B cell (primary cell): ENCODE measurements at regions of chr3 and their contacts with region 1.

Region 1: GRCh38 chr3:153161138-153161713 is 800 bp upstream of the RAP2B start:
- DNase-seq: peak; percentile 95
- ATAC-seq: peak; percentile 75
- H3K4me3 ChIP-seq: peak overlapping the region; percentile 61 to 99 (median 93)
- H3K4me3 Mint-ChIP-seq: peak overlapping the region; percentile 99
- H3K27ac ChIP-seq: peak overlapping the region; percentile 79 to 83
- H3K27ac Mint-ChIP-seq: peak overlapping the region; percentile 98
- H3K4me1 ChIP-seq: peaks cover 26 to 38% of the 10 kb centered on the region in 2 donors
- H3K4me1 Mint-ChIP-seq: peaks cover 47% of the 10 kb centered on the region
- H3K27me3 ChIP-seq: no peaks in the 10 kb centered on the region
- H3K27me3 Mint-ChIP-seq: no peaks in the 10 kb centered on the region
- CTCF ChIP-seq: no peak

Region 2: GRCh38 chr3:153069598-153070510 is 91.4 kb before region 1 on chr3:
- CTCF ChIA-PET with region 1: no interaction called
- POLR2A ChIA-PET with region 1: no interaction called
- intact Hi-C with region 1: no loop called
- DNase-seq: no peak
- ATAC-seq: no peak
- H3K4me3 ChIP-seq: no peak overlapping the region
- H3K4me3 Mint-ChIP-seq: no peak overlapping the region
- H3K27ac ChIP-seq: no peak overlapping the region
- H3K27ac Mint-ChIP-seq: no peak overlapping the region
- H3K4me1 ChIP-seq: no peaks in the 10 kb centered on the region
- H3K4me1 Mint-ChIP-seq: no peaks in the 10 kb centered on the region
- H3K27me3 ChIP-seq: no peaks in the 10 kb centered on the region
- H3K27me3 Mint-ChIP-seq: peaks cover 13% of the 10 kb centered on the region
- CTCF ChIP-seq: no peak

Region 3: DNA sequence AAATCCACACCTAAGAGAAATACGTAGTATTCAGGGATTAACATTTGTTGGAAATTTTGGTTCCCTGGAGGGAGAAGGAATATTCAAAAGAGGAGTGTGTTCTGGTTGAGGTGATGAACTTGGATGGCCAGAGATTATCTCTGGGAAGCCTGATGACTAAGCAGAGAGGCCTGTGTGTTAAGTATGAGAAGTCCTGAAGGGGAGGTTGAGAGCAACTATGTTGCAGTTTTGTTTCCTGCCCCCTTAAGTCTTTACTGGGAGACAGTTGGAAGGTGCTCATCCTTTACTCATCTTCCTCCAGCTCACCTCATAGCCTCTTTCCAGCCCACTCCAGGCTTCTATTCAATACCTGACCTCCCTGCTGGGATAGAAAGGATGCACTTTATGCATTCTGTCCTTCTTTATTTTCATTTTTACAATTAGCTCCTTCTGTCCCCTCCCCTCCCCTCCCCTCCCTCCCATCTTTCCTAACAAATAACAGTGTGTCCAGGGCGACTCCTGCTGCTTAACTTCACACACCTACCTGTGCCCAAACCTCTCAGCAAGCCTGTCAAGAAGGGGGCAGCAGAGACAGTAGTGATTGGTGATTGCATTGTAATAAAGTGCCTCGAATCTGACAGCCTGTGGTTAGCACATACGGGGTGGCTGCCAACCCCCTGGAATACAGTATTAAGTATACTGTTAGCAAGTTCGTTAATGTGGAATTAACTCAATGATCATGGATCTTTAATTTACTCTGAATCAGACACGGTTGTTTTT is 12.7 kb after region 1 on chr3:
- CTCF ChIA-PET with region 1: no interaction called
- POLR2A ChIA-PET with region 1: no interaction called
- intact Hi-C with region 1: no loop called
- DNase-seq: no peak
- ATAC-seq: no peak
- H3K4me3 ChIP-seq: no peak overlapping the region
- H3K4me3 Mint-ChIP-seq: no peak overlapping the region
- H3K27ac ChIP-seq: no peak overlapping the region
- H3K27ac Mint-ChIP-seq: no peak overlapping the region
- H3K4me1 ChIP-seq: no peaks in the 10 kb centered on the region
- H3K4me1 Mint-ChIP-seq: no peaks in the 10 kb centered on the region
- H3K27me3 ChIP-seq: no peaks in the 10 kb centered on the region
- H3K27me3 Mint-ChIP-seq: no peaks in the 10 kb centered on the region
- CTCF ChIP-seq: no peak

Region 4: GRCh38 chr3:153221748-153222162 is 60.5 kb after region 1 on chr3:
- CTCF ChIA-PET with region 1: interaction called, 5 read pairs
- POLR2A ChIA-PET with region 1: interaction called, 21 read pairs
- intact Hi-C with region 1: loop called (anchors 1 kb)
- DNase-seq: peak; percentile 65
- ATAC-seq: peak; percentile 98
- H3K4me3 ChIP-seq: peak overlapping the region; percentile 2 to 50 (median 35)
- H3K4me3 Mint-ChIP-seq: peak overlapping the region; percentile 71
- H3K27ac ChIP-seq: peak overlapping the region; percentile 67 to 75
- H3K27ac Mint-ChIP-seq: peak overlapping the region; percentile 88
- H3K4me1 ChIP-seq: peaks cover 27 to 32% of the 10 kb centered on the region in 2 donors
- H3K4me1 Mint-ChIP-seq: peaks cover 43% of the 10 kb centered on the region
- H3K27me3 ChIP-seq: no peaks in the 10 kb centered on the region
- H3K27me3 Mint-ChIP-seq: no peaks in the 10 kb centered on the region
- CTCF ChIP-seq: no peak

Region 5: GRCh38 chr3:153595186-153595815 is 434.1 kb after region 1 on chr3:
- CTCF ChIA-PET with region 1: interaction called, 3 read pairs
- POLR2A ChIA-PET with region 1: no interaction called
- intact Hi-C with region 1: loop called (anchors 1 kb)
- DNase-seq: peak; percentile 12
- ATAC-seq: no peak
- H3K4me3 ChIP-seq: no peak overlapping the region
- H3K4me3 Mint-ChIP-seq: no peak overlapping the region
- H3K27ac ChIP-seq: no peak overlapping the region
- H3K27ac Mint-ChIP-seq: no peak overlapping the region
- H3K4me1 ChIP-seq: no peaks in the 10 kb centered on the region
- H3K4me1 Mint-ChIP-seq: no peaks in the 10 kb centered on the region
- H3K27me3 ChIP-seq: no peaks in the 10 kb centered on the region
- H3K27me3 Mint-ChIP-seq: peaks cover 3% of the 10 kb centered on the region
- CTCF ChIP-seq: peak; percentile 21

Region 6: GRCh38 chr3:154252759-154253638 is 1091.8 kb after region 1 on chr3:
- CTCF ChIA-PET with region 1: interaction called, 6 read pairs
- POLR2A ChIA-PET with region 1: no interaction called
- intact Hi-C with region 1: loop called (anchors 10 kb)
- DNase-seq: peak; percentile 63
- ATAC-seq: peak; percentile 45
- H3K4me3 ChIP-seq: no peak overlapping the region
- H3K4me3 Mint-ChIP-seq: no peak overlapping the region
- H3K27ac ChIP-seq: no peak overlapping the region
- H3K27ac Mint-ChIP-seq: no peak overlapping the region
- H3K4me1 ChIP-seq: no peaks in the 10 kb centered on the region
- H3K4me1 Mint-ChIP-seq: peaks cover 3% of the 10 kb centered on the region
- H3K27me3 ChIP-seq: no peaks in the 10 kb centered on the region
- H3K27me3 Mint-ChIP-seq: no peaks in the 10 kb centered on the region
- CTCF ChIP-seq: peak; percentile 80